ENCODE measurements at regions of chr19 and their contacts with region 1.

Region 1: GRCh38 chr19:3618144-3618810 is 8.3 kb downstream of the CACTIN start:
- DNase-seq: peak; percentile 86
- ATAC-seq: peak; percentile 85

Region 2: DNA sequence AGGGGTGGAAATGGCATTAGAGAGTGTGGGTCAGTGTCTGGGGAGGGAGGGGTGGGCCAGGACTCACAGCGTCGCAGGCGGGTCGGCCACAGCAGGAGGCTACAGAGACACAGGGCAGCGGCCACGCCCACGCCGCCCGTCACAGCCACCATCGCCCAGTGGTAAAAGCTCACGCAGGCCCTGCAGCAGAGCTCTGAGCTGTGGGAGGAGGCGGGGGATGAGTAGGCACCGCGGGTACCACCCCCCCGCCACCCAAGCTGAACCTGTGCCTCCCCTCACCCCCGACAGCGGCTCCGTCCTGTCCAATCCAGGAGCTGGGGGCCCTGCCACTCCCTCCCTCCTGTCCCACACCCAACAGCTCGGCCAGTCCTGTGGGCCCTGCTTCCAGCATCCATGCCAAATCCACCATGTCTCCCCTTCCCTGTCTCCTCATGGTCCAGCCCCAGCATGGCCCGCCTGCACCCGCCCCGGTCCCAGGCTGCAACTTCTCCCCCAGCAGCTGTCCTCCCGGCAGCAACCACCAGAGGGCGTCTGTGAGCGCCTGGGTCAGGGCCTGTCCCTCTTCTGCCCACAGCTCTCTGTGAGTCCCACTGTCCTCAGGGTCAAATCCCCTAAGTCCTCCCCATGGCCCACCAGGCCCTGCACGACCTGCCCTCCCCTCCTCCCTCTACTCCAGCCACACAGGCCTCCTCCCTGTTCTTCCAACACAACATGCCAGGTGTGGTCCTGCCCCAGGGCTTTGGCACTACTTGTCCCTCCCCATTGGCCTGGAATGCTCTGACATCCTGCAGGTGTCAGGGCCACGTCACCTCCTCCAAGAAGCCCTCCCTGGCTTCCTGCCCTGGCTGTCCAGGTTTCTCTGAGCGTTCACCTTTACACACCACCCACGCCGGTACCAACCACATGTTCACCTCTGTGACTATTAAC is 73.3 kb before region 1 on chr19:
- intact Hi-C with region 1: loop called (anchors 5 kb)
- DNase-seq: peak; percentile 83
- ATAC-seq: peak; percentile 74

Region 3: GRCh38 chr19:3586124-3586626 is 32.1 kb before region 1 on chr19:
- intact Hi-C with region 1: loop called (anchors 2 kb)
- DNase-seq: no peak
- ATAC-seq: no peak

Measured in Right ventricle myocardium superior (tissue), 1 donor.